Psoas muscle (tissue), 8 donors: ENCODE measurements at regions of chr17 and their contacts with region 1.

Region 1: GRCh38 chr17:21457051-21458026 is 81.2 kb downstream of the KCNJ12 start:
- DNase-seq: peak; percentile 91 to 96
- ATAC-seq: peak; percentile 90 to 97 (median 92)
- H3K4me3 ChIP-seq: no peak overlapping the region
- H3K27ac ChIP-seq: peak overlapping the region; percentile 66
- H3K4me1 ChIP-seq: peaks cover 4% of the 10 kb centered on the region
- H3K27me3 ChIP-seq: no peaks in the 10 kb centered on the region
- CTCF ChIP-seq: peak; percentile 94

Region 2: DNA sequence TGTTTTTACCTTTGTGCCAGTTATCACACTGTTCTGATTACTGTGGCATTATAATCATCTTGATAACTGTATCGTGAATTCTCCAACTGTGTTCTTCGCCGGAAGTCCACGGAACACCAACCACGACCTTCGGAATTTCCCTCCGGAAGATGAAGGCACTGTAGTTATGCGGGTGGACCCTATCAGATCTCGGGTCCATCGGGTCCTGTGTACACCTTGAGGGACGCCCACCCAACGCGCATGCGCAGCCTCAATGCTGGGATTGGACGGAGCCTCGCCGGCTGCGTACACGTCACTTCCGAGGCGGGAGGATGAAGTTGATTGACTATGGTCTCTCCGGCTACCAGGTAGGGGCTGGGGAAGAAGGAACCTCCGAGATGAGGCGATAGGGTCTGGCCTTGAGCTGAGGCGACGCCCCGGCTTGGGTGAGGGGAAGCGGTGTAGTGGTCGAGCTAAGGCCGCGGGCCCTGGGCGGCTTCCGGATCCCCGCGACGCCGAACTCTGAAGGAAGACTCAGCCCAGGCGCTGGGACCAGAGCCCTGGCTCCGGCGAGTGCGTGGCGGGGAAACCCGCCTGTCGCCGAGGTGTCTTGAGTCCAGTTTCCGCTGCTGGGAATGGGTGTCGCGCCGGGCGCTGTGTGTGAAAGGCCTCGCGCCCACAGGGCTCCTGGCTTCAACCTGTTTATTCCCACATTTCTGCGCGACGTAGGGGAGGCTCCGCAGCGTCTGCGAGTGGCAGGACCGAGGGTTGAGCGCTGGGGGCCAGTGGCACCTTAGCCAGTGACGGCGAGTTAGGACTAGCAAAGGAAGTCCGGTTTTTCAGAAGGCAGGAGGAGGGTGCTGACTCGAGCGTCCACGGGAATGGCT is 330.5 kb before region 1 on chr17 and contains the start of gene DHRS7B:
- intact Hi-C with region 1: loop called in 1 of 2 experiments (anchors 10 kb)
- DNase-seq: peak; percentile 95 to 98
- ATAC-seq: peak; percentile 93 to 96 (median 95)
- H3K4me3 ChIP-seq: peak within 1 kb of the TSS; percentile 93
- H3K27ac ChIP-seq: peak within 1 kb of the TSS; percentile 98
- H3K4me1 ChIP-seq: peaks cover 37% of the 10 kb centered on the region
- H3K27me3 ChIP-seq: no peaks in the 10 kb centered on the region
- CTCF ChIP-seq: no peak
- total RNA-seq, gene DHRS7B: 15.7 to 50.1 (median 37.7) TPM

Region 3: GRCh38 chr17:21313320-21313719 is 144.0 kb before region 1 on chr17:
- intact Hi-C with region 1: loop called in 1 of 2 experiments (anchors 5 kb)
- DNase-seq: peak; percentile 6 to 32
- ATAC-seq: no peak
- H3K4me3 ChIP-seq: no peak overlapping the region
- H3K27ac ChIP-seq: no peak overlapping the region
- H3K4me1 ChIP-seq: no peaks in the 10 kb centered on the region
- H3K27me3 ChIP-seq: no peaks in the 10 kb centered on the region
- CTCF ChIP-seq: no peak

Region 4: GRCh38 chr17:21467739-21468490 is 10.6 kb after region 1 on chr17:
- intact Hi-C with region 1: no loop called
- DNase-seq: no peak
- ATAC-seq: no peak
- H3K4me3 ChIP-seq: no peak overlapping the region
- H3K27ac ChIP-seq: no peak overlapping the region
- H3K4me1 ChIP-seq: no peaks in the 10 kb centered on the region
- H3K27me3 ChIP-seq: peaks cover 0 to 4% (median 0%) of the 10 kb centered on the region in 3 donors
- CTCF ChIP-seq: no peak

Region 5: GRCh38 chr17:21525464-21526130 is 68.3 kb after region 1 on chr17:
- intact Hi-C with region 1: no loop called
- DNase-seq: no peak
- ATAC-seq: peak in 2 of 4 donors; percentile 9 to 13
- H3K4me3 ChIP-seq: no peak overlapping the region
- H3K27ac ChIP-seq: no peak overlapping the region
- H3K4me1 ChIP-seq: peaks cover 43% of the 10 kb centered on the region
- H3K27me3 ChIP-seq: no peaks in the 10 kb centered on the region
- CTCF ChIP-seq: peak; percentile 4

Region 6: DNA sequence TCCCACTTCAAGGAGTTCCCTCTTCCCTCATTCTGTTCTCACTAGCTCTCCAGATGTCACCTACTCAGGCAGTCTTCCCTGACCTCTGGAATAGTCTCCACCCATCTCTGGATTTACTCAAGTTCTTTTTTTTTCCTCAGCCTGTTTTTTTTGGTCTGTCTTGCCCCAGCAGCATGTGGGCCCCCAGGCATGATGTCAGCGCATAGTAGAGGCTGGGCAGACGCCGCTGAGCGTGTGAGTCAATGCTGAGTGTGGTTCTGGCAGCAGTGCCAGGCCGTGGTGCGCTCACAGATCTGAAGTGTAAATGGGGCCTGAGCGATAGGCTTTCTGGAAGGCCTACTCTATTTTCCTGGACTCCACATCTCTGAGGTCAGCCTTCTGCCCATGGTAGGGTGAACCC is 232.3 kb after region 1 on chr17:
- intact Hi-C with region 1: no loop called
- DNase-seq: peak in 1 of 2 donors; percentile 68
- ATAC-seq: peak; percentile 39 to 77 (median 47)
- H3K4me3 ChIP-seq: no peak overlapping the region
- H3K27ac ChIP-seq: no peak overlapping the region
- H3K4me1 ChIP-seq: no peaks in the 10 kb centered on the region
- H3K27me3 ChIP-seq: no peaks in the 10 kb centered on the region
- CTCF ChIP-seq: no peak